ENCODE measurements at regions of chr6 and their contacts with region 1.

Region 1: GRCh38 chr6:89242574-89243330 is 25.6 kb upstream of the GABRR1 start:
- DNase-seq: no peak
- H3K4me3 ChIP-seq: no peak overlapping the region
- H3K27ac ChIP-seq: peak overlapping the region in 1 of 4 donors; percentile 6
- H3K4me1 ChIP-seq: peaks cover 0 to 8% (median 0%) of the 10 kb centered on the region in 4 donors
- H3K27me3 ChIP-seq: no peaks in the 10 kb centered on the region
- CTCF ChIP-seq: peak; percentile 35 to 70 (median 64)
- EP300 ChIP-seq: no peak
- POLR2A ChIP-seq: no peak

Region 2: GRCh38 chr6:89122625-89123024 is 120.1 kb before region 1 on chr6:
- intact Hi-C with region 1: loop called (anchors 2 kb)
- DNase-seq: no peak
- H3K4me3 ChIP-seq: no peak overlapping the region
- H3K27ac ChIP-seq: peak overlapping the region in 1 of 4 donors; percentile 28
- H3K4me1 ChIP-seq: peaks cover 0 to 8% (median 3%) of the 10 kb centered on the region in 4 donors
- H3K27me3 ChIP-seq: no peaks in the 10 kb centered on the region
- CTCF ChIP-seq: peak in 3 of 4 experiments; percentile 20 to 56 (median 34)
- EP300 ChIP-seq: no peak
- POLR2A ChIP-seq: no peak

Region 3: DNA sequence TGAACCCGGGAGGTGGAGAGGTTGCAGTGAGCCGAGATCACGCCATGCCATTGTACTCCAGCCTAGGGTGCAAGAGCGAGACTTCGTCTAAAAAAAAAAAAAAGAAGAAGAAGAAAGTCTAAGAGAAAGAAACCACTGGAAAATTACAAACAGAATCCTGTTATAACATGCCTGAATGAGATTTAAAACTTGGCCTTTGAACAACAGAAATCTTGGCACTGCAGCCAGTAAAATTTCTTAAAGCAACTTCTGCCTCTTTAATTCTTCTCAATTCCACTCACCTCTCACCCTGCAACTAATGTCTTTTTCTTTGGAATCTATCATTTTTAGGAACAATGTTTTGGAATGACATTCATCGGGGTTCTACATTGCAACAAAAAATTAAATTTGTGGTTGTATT is 70.6 kb before region 1 on chr6:
- intact Hi-C with region 1: loop called (anchors 5 kb)
- DNase-seq: no peak
- H3K4me3 ChIP-seq: no peak overlapping the region
- H3K27ac ChIP-seq: no peak overlapping the region
- H3K4me1 ChIP-seq: peaks cover 0 to 17% (median 0%) of the 10 kb centered on the region in 4 donors
- H3K27me3 ChIP-seq: no peaks in the 10 kb centered on the region
- CTCF ChIP-seq: no peak
- EP300 ChIP-seq: no peak
- POLR2A ChIP-seq: no peak

Measured in sigmoid colon (tissue), 7 donors.